GM10248 (cell line): ENCODE measurements at regions of chr14 and their contacts with region 1.

Region 1: DNA sequence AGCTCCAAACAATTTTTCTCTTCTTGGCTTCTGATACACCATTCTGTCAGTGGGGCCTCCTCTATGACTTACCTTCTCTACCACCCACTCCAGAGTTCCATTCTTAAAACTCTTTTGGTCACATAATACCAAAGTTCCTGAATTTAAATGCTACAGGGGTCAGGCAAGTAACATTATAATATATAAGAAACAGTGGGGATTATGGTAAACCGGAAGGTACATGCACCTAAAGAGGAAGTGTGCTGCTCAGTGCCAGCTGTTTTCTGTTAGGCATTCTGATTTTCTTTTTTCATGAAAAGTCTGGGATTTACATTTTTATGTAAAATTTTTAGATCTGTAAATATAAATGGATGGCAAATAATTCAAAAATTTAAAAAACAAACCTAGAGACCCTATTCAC is 39.9 kb downstream of the SOS2 start:
- DNase-seq: no peak
- CTCF ChIP-seq: no peak

Region 2: DNA sequence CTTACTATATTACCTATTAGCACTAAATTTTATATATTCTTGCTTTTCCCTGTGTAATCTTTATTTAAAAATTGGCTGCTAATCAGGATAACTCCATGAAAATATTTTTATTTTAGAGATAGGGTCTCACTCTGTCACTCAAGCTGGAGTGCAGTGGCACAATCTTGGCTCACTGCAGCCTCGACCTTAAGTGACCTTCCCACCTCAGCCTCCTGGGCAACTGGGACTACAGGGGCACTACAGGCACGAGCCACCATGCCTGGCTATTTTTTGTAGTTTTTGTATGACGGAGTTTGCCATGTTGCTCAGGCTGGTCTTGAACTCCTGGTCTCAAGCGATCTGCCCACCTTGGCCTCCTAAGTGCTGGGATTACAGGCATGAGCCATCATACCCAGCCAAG is 42.7 kb before region 1 on chr14:
- CTCF ChIA-PET with region 1: no interaction called
- POLR2A ChIA-PET with region 1: no interaction called
- DNase-seq: no peak
- CTCF ChIP-seq: no peak

Region 3: GRCh38 chr14:50210074-50210473 is 18.6 kb after region 1 on chr14:
- CTCF ChIA-PET with region 1: interaction called, 11 read pairs
- POLR2A ChIA-PET with region 1: no interaction called
- DNase-seq: no peak
- CTCF ChIP-seq: no peak